GM12878 (cell line): ENCODE measurements at regions of chr1 and their contacts with region 1.

Region 1: GRCh38 chr1:154870115-154870571 is at the start of gene KCNN3:
- DNase-seq: peak; percentile 82
- ATAC-seq: peak; percentile 89
- H3K4me3 ChIP-seq: peak within 1 kb of the TSS; percentile 88
- H3K27ac ChIP-seq: peak within 1 kb of the TSS; percentile 46
- H3K4me1 ChIP-seq: peaks cover 58% of the 10 kb centered on the region
- H3K27me3 ChIP-seq: no peaks in the 10 kb centered on the region
- CTCF ChIP-seq: no peak
- EP300 ChIP-seq: no peak
- POLR2A ChIP-seq: peak; percentile 89
- RAD21 ChIP-seq: no peak
- polyA plus RNA-seq, gene KCNN3: 3.5 to 6.4 TPM

Region 2: DNA sequence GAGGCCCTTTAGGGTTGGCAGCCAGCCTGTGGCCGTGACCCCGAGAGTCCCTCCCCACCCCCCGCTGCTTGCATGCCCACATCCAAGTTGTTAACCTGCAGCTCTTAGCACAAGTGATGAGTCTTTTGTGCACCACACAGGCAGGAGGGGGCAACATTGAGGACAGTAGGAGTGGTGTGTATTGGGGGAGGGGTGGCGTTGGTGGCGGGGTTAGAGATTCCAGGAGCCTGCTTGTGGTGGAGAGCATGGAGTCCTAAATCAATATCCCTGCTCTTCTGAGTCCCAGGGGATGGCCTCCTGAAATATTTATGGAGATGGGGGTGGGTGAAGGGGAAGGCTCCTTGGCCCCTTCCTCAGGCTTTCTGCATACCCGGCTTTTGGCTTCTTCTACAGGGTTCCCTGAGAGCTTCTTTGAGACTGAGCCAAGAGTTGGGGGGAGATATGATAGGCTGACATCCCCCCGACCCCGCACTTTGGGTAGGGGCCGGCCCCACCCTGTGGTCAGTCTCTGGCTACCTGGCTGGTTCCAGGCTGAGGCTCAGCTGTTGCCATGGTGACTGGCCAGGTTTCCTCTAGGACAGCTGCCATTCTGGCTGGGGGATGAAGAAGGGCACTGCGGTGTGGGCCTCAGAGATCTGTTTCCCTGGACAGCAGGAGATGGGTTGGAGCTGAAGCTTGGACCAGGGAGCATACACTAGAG is 297.5 kb before region 1 on chr1:
- CTCF ChIA-PET with region 1: no interaction called
- POLR2A ChIA-PET with region 1: no interaction called
- RAD21 ChIA-PET with region 1: no interaction called
- SMC1A ChIA-PET with region 1: no interaction called
- in situ Hi-C with region 1: no loop called
- intact Hi-C with region 1: no loop called
- DNase-seq: no peak
- ATAC-seq: no peak; the same call in 2 of the 3 replicates
- H3K4me3 ChIP-seq: no peak overlapping the region
- H3K27ac ChIP-seq: no peak overlapping the region
- H3K4me1 ChIP-seq: no peaks in the 10 kb centered on the region
- H3K27me3 ChIP-seq: peaks cover 0 to 5% of the 10 kb centered on the region in 2 experiments; a peak in 2 of 4 replicates
- CTCF ChIP-seq: no peak
- EP300 ChIP-seq: no peak
- POLR2A ChIP-seq: no peak
- RAD21 ChIP-seq: no peak

Region 3: DNA sequence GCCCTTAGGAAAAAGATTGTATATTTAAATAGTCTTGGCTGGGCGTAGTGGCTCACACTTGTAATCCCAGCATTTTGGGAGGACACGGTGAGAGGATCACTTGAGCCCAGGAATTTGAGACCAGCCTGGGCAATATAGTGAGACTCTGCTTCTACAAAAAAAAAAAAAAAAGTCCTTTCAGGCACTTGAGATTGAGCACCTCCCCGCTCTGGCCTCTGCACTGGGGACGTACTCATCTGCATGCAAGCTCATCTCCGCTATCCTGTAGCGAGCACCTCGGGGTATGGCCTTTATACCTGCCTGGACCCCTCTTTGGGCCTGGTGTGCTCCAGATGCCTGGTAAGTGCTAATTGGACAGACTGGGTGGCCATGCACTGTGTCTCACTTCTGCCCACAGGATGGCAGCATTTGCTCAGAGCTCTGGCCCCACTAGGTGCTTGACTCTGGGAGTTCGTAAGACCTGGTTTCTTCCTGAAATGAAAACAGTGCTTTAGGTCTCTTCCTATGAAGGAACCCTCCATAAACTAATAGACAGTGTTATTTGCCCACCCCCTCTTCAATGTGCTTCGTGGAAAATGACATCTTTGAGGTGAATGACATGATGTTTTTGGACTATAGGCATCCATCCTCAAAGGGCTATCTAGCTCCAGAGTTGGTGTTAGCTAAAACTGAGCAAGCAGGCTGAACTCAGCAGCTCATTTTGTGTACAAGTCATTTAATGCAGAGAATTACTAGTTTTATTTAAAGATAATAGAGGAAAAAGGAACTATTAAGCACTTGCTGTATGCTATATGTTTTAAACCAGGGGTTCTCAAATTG is 200.5 kb before region 1 on chr1:
- CTCF ChIA-PET with region 1: interaction called, 137 read pairs
- POLR2A ChIA-PET with region 1: interaction called, 5 read pairs
- RAD21 ChIA-PET with region 1: interaction called, 37 read pairs
- SMC1A ChIA-PET with region 1: interaction called, 113 read pairs
- in situ Hi-C with region 1: no loop called
- intact Hi-C with region 1: no loop called
- DNase-seq: peak; percentile 67
- ATAC-seq: peak; percentile 100
- H3K4me3 ChIP-seq: no peak overlapping the region
- H3K27ac ChIP-seq: no peak overlapping the region
- H3K4me1 ChIP-seq: no peaks in the 10 kb centered on the region
- H3K27me3 ChIP-seq: no peaks in the 10 kb centered on the region
- CTCF ChIP-seq: peak; percentile 90 to 96 (median 93); a peak in 5 of 6 replicates
- EP300 ChIP-seq: no peak
- POLR2A ChIP-seq: no peak
- RAD21 ChIP-seq: peak; percentile 98

Region 4: DNA sequence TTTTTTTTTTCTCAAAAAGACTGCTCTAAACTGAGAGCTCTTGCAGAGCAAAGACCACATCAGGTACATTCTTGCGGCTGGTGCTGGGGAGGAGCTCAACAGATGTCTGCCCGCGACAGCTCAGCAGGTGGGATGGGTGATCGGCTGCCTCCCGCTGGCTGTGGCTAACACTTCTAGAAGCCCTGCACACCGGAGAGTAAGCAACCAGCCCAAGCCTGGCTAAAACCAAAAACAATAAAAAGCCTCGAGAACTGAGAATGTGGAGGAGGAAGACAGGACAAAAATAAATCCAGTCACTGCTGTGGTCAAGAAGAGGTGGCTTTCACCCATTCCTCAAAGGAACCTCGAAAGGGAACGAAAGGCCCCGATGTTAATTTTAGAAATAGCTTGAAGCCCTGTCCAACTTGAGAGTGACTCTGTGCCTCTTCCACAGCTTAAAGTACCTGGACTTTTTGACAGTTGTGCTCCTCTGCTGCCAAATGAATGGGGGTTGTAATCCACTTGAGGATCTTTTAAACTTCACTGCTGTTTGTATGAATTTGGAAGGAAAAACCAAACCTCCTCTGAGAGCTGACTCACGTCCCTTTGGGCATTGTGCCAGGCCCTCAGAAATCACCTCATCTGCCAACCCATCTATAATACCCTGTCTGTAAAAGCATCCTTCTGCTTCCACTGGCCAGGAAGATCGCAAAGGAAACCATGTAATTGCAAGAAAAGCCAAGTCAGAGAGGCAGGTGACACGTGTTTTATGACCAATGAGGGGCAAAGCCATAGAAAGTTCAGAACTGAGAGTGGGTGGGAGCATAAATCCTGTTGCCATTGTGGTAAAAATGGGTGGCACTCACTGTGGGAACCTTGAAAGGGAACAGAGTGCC is 78.6 kb before region 1 on chr1:
- CTCF ChIA-PET with region 1: interaction called, 10 read pairs
- POLR2A ChIA-PET with region 1: interaction called, 12 read pairs
- RAD21 ChIA-PET with region 1: interaction called, 40 read pairs
- SMC1A ChIA-PET with region 1: interaction called, 14 read pairs
- in situ Hi-C with region 1: no loop called
- intact Hi-C with region 1: no loop called
- DNase-seq: peak; percentile 88
- ATAC-seq: peak; percentile 97
- H3K4me3 ChIP-seq: peak overlapping the region; percentile 49; the same call in 1 of the 2 replicates
- H3K27ac ChIP-seq: peak overlapping the region; percentile 59
- H3K4me1 ChIP-seq: peaks cover 39% of the 10 kb centered on the region
- H3K27me3 ChIP-seq: no peaks in the 10 kb centered on the region
- CTCF ChIP-seq: peak; percentile 39 to 41 (median 40)
- EP300 ChIP-seq: peak; percentile 76 to 77
- POLR2A ChIP-seq: no peak
- RAD21 ChIP-seq: peak; percentile 48

Region 5: DNA sequence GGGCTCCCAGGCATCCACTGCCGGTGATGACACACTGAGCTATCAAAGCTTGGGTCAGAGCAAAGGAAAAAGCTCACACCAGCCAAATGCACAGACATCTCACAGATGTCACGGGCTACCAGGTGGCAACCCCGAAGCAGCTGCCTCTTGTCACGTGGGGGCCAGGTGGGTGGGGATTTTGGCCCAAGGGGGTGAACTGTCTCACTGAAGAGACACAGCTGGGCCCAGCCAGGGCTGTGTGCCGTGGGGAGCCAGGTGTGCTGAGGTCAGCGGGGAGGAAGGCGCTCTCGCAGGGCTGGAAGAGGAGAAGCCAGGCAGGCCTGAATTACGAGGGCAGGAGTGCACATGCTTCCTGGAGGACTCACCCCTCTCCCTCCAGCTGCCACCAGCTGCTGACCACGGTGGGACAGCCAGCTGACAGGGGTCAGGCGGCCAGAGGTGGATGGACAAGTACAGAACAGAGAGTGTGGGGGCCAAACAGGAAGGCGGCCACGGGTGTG is 32.4 kb before region 1 on chr1:
- CTCF ChIA-PET with region 1: interaction called, 5 read pairs
- POLR2A ChIA-PET with region 1: interaction called, 14 read pairs
- RAD21 ChIA-PET with region 1: interaction called, 21 read pairs
- SMC1A ChIA-PET with region 1: interaction called, 13 read pairs
- in situ Hi-C with region 1: no loop called
- intact Hi-C with region 1: no loop called
- DNase-seq: no peak
- ATAC-seq: peak; percentile 84
- H3K4me3 ChIP-seq: no peak overlapping the region
- H3K27ac ChIP-seq: no peak overlapping the region
- H3K4me1 ChIP-seq: peaks cover 33% of the 10 kb centered on the region
- H3K27me3 ChIP-seq: no peaks in the 10 kb centered on the region
- CTCF ChIP-seq: no peak
- EP300 ChIP-seq: peak in 1 of 2 experiments; percentile 73; a peak in 2 of 4 replicates
- POLR2A ChIP-seq: peak; percentile 47; the same call in 1 of the 2 replicates
- RAD21 ChIP-seq: no peak

Region 6: GRCh38 chr1:154936555-154937084 is 66.5 kb after region 1 on chr1 and contains the start of gene PMVK:
- CTCF ChIA-PET with region 1: interaction called, 8 read pairs
- POLR2A ChIA-PET with region 1: interaction called, 14 read pairs
- RAD21 ChIA-PET with region 1: interaction called, 15 read pairs
- SMC1A ChIA-PET with region 1: interaction called, 9 read pairs
- in situ Hi-C with region 1: no loop called
- intact Hi-C with region 1: no loop called
- DNase-seq: peak; percentile 84
- ATAC-seq: peak; percentile 79
- H3K4me3 ChIP-seq: peak within 1 kb of the TSS; percentile 87
- H3K27ac ChIP-seq: peak within 1 kb of the TSS; percentile 100
- H3K4me1 ChIP-seq: peaks cover 38% of the 10 kb centered on the region
- H3K27me3 ChIP-seq: no peaks in the 10 kb centered on the region
- CTCF ChIP-seq: peak; percentile 24 to 47 (median 41); a peak in 4 of 6 replicates
- EP300 ChIP-seq: peak; percentile 23 to 37; a peak in 3 of 4 replicates
- POLR2A ChIP-seq: peak; percentile 95
- RAD21 ChIP-seq: peak; percentile 7; the same call in 1 of the 2 replicates
- polyA plus RNA-seq, gene PMVK: 6.0 to 28.8 TPM